ENCODE measurements at regions of chr6 and their contacts with region 1.

Region 1: DNA sequence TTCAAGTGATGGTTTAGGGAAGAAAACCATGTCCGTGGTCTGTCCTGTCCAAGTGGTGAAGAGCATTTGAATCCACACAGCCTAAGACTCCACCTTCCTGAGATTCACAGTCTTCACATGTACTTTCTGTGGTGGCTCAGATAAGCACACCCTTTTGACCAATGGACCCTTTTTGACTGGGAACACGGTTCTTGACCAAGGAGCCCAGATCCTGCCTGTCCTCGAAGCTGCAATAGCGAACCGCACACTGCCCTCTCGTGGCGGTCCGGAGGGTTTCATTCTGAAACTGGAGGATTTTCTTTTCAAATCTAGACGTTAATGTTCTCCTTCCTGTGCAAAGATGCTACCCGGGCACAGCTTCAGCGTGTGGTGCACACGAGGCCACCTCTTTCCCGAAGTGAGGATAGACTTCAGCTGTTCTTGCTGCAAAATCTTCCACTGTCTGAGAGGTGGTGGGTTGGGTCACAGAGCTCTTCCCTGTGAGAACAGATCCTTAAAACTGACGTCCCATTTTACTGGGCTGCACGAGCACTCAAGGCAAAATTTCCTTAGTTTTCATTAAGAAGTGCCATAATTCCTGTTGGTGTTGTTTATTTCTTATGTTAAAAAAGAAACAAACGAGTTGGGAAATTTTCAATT is 90.5 kb downstream of the SYNJ2 start:
- DNase-seq: peak; percentile 58
- H3K4me3 ChIP-seq: no peak overlapping the region
- H3K27ac ChIP-seq: no peak overlapping the region
- H3K27me3 ChIP-seq: no peaks in the 10 kb centered on the region
- CTCF ChIP-seq: peak; percentile 86

Region 2: GRCh38 chr6:157981395-157982296 is 90.6 kb before region 1 on chr6 and contains the start of gene SYNJ2:
- CTCF ChIA-PET with region 1: interaction called, 19 read pairs
- POLR2A ChIA-PET with region 1: no interaction called
- DNase-seq: peak; percentile 63
- H3K4me3 ChIP-seq: peak within 1 kb of the TSS; percentile 79
- H3K27ac ChIP-seq: peak within 1 kb of the TSS; percentile 65
- H3K27me3 ChIP-seq: no peaks in the 10 kb centered on the region
- CTCF ChIP-seq: peak; percentile 60
- polyA plus RNA-seq, gene SYNJ2: 38.1 and 40.8 TPM in 2 replicates

Region 3: GRCh38 chr6:158060455-158061360 is 11.5 kb before region 1 on chr6:
- CTCF ChIA-PET with region 1: interaction called, 62 read pairs
- POLR2A ChIA-PET with region 1: interaction called, 5 read pairs
- DNase-seq: peak; percentile 59
- H3K4me3 ChIP-seq: no peak overlapping the region
- H3K27ac ChIP-seq: peak overlapping the region; percentile 83
- H3K27me3 ChIP-seq: no peaks in the 10 kb centered on the region
- CTCF ChIP-seq: no peak

Region 4: DNA sequence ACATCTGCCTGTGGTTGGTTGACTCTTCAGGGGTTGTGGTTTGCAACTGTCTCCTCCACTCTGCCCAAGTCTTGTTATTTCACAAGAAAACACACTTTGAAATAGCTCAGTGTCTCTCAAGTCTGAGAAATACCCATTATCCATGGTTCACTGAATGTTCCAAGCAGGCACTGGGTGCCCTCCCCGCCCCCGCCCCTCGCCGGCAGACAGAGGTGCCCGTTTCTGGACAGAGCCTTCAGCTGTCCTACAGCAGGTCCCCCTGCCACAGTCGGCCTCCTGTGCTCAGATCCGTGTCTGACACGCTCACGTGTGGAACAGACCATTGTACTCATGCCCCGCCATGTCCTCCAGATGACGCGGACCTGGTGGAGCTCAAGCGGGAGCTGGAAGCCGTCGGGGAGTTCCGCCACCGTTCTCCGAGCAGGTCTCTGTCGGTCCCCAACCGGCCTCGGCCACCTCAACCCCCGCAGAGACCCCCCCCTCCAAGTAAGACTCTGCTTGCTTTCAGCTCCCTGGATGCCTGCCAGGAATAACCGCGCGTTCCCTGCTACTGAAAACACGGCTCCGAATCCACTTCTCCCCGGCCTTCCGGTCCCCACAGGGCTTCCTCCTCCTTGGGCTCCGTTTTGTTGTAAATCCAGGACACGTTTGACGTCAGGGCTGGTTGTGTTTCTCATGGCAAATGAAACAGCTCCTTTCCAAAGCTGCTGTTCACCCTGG is 14.5 kb after region 1 on chr6:
- CTCF ChIA-PET with region 1: interaction called, 23 read pairs
- POLR2A ChIA-PET with region 1: no interaction called
- DNase-seq: peak; percentile 36
- H3K4me3 ChIP-seq: no peak overlapping the region
- H3K27ac ChIP-seq: peak overlapping the region; percentile 11
- H3K27me3 ChIP-seq: no peaks in the 10 kb centered on the region
- CTCF ChIP-seq: no peak

Region 5: GRCh38 chr6:158231551-158232315 is 159.5 kb after region 1 on chr6:
- CTCF ChIA-PET with region 1: no interaction called
- POLR2A ChIA-PET with region 1: no interaction called
- DNase-seq: no peak
- H3K4me3 ChIP-seq: peak overlapping the region; percentile 82
- H3K27ac ChIP-seq: peak overlapping the region; percentile 83
- H3K27me3 ChIP-seq: no peaks in the 10 kb centered on the region
- CTCF ChIP-seq: no peak